ENCODE measurements at regions of chr3 and their contacts with region 1.

Region 1: DNA sequence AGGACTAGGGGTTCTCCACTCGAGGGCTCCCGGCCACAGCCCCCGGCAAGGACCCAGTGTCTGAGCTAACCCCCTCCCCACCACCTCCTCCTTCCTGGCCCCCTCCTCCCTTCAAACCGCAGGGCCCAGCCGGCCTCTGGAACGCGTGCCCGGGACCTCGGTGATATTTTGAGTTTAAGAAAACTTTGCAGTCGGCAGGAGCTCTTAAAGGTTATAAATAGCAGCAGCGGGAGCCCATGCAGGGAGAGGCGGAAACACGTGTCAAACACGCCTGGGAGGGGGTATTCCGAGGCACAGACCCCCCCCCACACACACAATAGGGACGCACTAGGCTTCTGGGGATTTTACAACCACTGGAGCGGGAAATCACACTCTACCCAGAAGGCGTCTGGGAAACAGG is 3.1 kb upstream of the PTH1R start:
- DNase-seq: peak; percentile 20
- CTCF ChIP-seq: no peak

Region 2: GRCh38 chr3:46065294-46065721 is 809.1 kb before region 1 on chr3:
- CTCF ChIA-PET with region 1: no interaction called
- POLR2A ChIA-PET with region 1: no interaction called
- DNase-seq: peak; percentile 57
- CTCF ChIP-seq: no peak

Region 3: DNA sequence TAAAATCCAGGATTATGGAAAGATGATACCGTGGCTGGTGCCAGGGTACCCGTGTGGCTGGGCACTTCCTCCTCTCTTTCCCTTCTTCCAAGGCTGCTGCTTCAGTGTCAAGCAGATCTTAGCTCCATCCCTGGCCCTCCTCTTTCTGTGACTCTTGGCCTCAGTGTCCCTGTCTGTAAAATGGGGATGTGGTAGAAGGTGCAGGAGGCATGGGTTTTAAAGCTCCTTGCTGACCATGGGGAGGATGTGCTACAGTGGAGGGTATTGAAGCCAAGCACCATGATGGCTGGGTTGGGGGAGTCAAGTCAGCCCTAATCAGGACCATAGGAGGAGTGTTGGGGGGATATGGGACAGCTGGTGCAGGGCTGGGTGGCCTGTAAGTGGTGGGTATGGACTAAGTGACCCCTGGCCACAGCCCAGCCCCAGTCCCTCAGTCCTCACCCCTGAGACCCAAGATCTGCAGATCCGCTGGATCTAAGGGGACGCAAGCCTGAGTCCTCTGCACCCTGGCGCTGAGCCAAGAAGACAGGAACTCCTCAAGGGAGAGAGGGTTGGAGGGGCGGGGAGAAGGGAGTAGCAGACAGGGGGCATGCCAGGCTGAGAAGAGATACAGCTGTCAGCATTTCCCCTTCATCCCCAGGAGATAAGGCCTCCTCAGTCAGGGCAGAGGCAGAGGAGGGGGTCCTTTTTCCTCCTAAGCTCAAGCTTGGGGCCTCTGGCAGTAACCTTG is 15.1 kb after region 1 on chr3:
- CTCF ChIA-PET with region 1: interaction called, 10 read pairs
- POLR2A ChIA-PET with region 1: no interaction called
- DNase-seq: no peak
- CTCF ChIP-seq: no peak

Region 4: GRCh38 chr3:47266709-47267489 is 392.5 kb after region 1 on chr3:
- CTCF ChIA-PET with region 1: no interaction called
- POLR2A ChIA-PET with region 1: no interaction called
- DNase-seq: peak; percentile 60
- CTCF ChIP-seq: no peak

Measured in GM10248 (cell line).